MCF 10A (cell line): ENCODE measurements at regions of chr22 and their contacts with region 1.

Region 1: GRCh38 chr22:19291580-19292457 is at the start of gene CLTCL1:
- DNase-seq: peak; percentile 57
- H3K4me3 Mint-ChIP-seq: peak within 1 kb of the TSS; percentile 84
- H3K27ac Mint-ChIP-seq: peak within 1 kb of the TSS; percentile 52
- H3K4me1 Mint-ChIP-seq: peaks cover 35% of the 10 kb centered on the region
- H3K27me3 Mint-ChIP-seq: no peaks in the 10 kb centered on the region
- CTCF ChIP-seq: no peak
- total RNA-seq, gene CLTCL1: 12.2 and 21.7 TPM in 2 replicates

Region 2: GRCh38 chr22:19122143-19122751 is 169.6 kb before region 1 on chr22 and contains the start of gene DGCR2:
- CTCF ChIA-PET with region 1: no interaction called
- POLR2A ChIA-PET with region 1: interaction called, 11 read pairs
- intact Hi-C with region 1: no loop called
- DNase-seq: peak; percentile 97
- H3K4me3 Mint-ChIP-seq: peak within 1 kb of the TSS; percentile 85
- H3K27ac Mint-ChIP-seq: peak within 1 kb of the TSS; percentile 86
- H3K4me1 Mint-ChIP-seq: peaks cover 17% of the 10 kb centered on the region
- H3K27me3 Mint-ChIP-seq: no peaks in the 10 kb centered on the region
- CTCF ChIP-seq: no peak
- total RNA-seq, gene DGCR2: 41.2 and 50.1 TPM in 2 replicates

Region 3: DNA sequence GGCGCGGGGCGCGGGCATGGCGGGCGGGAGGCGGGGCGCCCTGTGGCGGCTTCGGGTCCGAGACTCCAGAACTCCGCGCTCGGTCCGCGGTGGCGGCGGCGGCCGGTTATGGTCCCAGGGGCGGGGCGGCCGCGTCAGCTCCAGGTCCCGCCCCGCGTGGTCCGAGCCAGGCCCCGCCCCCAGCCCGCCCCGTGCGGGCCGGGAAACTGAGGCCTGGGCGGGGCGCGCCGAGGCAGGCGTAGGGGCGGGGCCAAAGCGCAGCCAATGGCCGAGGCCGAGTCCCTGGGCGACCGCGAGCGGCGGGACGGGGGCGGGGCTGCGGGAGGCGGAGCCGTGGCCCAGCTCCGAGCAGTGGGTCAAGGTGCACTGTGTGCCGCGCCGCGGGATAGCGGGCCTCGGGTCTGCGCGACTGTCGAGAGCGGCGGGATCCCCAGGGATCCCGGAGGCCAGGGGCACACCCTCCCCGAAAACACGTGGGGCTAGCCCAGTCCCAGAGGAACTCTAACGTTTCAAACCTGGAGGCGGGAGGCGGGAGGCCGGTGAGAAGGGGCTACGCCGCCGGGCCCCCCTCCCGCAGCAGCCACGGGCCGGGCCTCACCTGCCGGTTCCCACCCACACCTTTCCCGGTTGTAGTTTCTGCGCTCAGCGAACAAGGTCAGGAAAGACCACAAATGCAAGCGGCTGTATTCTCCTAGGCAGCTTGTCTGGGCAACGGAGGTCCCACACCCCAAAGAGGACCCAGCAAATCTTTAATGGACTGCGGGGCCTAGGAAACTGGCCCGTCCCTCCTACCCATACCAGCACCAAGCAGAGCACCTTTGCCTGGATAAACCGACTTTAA is 112.9 kb before region 1 on chr22 and contains the start of gene SLC25A1:
- CTCF ChIA-PET with region 1: interaction called, 4 read pairs
- POLR2A ChIA-PET with region 1: interaction called, 17 read pairs
- intact Hi-C with region 1: loop called (anchors 2 kb)
- DNase-seq: peak; percentile 90
- H3K4me3 Mint-ChIP-seq: peak within 1 kb of the TSS; percentile 75
- H3K27ac Mint-ChIP-seq: peak within 1 kb of the TSS; percentile 31
- H3K4me1 Mint-ChIP-seq: peaks cover 18% of the 10 kb centered on the region
- H3K27me3 Mint-ChIP-seq: no peaks in the 10 kb centered on the region
- CTCF ChIP-seq: no peak
- total RNA-seq, gene SLC25A1: 41.0 and 53.9 TPM in 2 replicates

Region 4: DNA sequence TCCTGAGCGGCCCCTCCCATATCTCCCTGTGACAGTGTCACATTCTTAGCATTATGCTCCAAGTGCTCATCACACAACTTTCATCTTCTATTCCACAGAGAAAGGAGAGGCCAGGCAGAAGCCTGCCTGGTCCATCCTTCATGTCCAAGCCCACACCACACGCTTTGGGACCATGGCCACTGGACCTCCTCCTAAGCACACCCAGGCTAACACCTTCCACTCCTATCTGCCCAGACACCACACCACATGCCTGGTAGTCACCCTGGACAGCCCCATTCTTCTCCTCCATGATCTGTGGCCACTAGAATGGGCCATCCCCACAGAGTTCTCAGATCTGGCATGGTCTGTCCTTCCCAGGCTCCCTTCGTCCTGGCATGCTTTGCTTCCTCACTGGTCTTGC is 84.4 kb after region 1 on chr22:
- CTCF ChIA-PET with region 1: no interaction called
- POLR2A ChIA-PET with region 1: no interaction called
- intact Hi-C with region 1: no loop called
- DNase-seq: no peak
- H3K4me3 Mint-ChIP-seq: no peak overlapping the region
- H3K27ac Mint-ChIP-seq: no peak overlapping the region
- H3K4me1 Mint-ChIP-seq: no peaks in the 10 kb centered on the region
- H3K27me3 Mint-ChIP-seq: no peaks in the 10 kb centered on the region
- CTCF ChIP-seq: no peak

Region 5: GRCh38 chr22:19432133-19432851 is 140.5 kb after region 1 on chr22 and contains the start of gene MRPL40:
- CTCF ChIA-PET with region 1: interaction called, 3 read pairs
- POLR2A ChIA-PET with region 1: interaction called, 18 read pairs
- intact Hi-C with region 1: no loop called
- DNase-seq: peak; percentile 94
- H3K4me3 Mint-ChIP-seq: peak within 1 kb of the TSS; percentile 86
- H3K27ac Mint-ChIP-seq: peak within 1 kb of the TSS; percentile 91
- H3K4me1 Mint-ChIP-seq: peaks cover 11% of the 10 kb centered on the region
- H3K27me3 Mint-ChIP-seq: no peaks in the 10 kb centered on the region
- CTCF ChIP-seq: no peak
- total RNA-seq, gene MRPL40: 51.9 and 66.7 TPM in 2 replicates

Region 6: GRCh38 chr22:19717691-19718455 is 426.1 kb after region 1 on chr22:
- CTCF ChIA-PET with region 1: no interaction called
- POLR2A ChIA-PET with region 1: no interaction called
- intact Hi-C with region 1: loop called (anchors 10 kb)
- DNase-seq: peak; percentile 64
- H3K4me3 Mint-ChIP-seq: peak overlapping the region; percentile 68
- H3K27ac Mint-ChIP-seq: no peak overlapping the region
- H3K4me1 Mint-ChIP-seq: peaks cover 3% of the 10 kb centered on the region
- H3K27me3 Mint-ChIP-seq: no peaks in the 10 kb centered on the region
- CTCF ChIP-seq: peak; percentile 96